ENCODE measurements at regions of chr1 and their contacts with region 1.

Region 1: GRCh38 chr1:157969697-157970485 is 23.6 kb upstream of the KIRREL1 start:
- DNase-seq: no peak
- H3K4me3 ChIP-seq: no peak overlapping the region
- H3K27ac ChIP-seq: no peak overlapping the region
- H3K4me1 ChIP-seq: no peaks in the 10 kb centered on the region
- H3K27me3 ChIP-seq: peaks cover 0 to 1% of the 10 kb centered on the region in 2 donors
- CTCF ChIP-seq: peak; percentile 22 to 51 (median 32)
- POLR2A ChIP-seq: no peak

Region 2: DNA sequence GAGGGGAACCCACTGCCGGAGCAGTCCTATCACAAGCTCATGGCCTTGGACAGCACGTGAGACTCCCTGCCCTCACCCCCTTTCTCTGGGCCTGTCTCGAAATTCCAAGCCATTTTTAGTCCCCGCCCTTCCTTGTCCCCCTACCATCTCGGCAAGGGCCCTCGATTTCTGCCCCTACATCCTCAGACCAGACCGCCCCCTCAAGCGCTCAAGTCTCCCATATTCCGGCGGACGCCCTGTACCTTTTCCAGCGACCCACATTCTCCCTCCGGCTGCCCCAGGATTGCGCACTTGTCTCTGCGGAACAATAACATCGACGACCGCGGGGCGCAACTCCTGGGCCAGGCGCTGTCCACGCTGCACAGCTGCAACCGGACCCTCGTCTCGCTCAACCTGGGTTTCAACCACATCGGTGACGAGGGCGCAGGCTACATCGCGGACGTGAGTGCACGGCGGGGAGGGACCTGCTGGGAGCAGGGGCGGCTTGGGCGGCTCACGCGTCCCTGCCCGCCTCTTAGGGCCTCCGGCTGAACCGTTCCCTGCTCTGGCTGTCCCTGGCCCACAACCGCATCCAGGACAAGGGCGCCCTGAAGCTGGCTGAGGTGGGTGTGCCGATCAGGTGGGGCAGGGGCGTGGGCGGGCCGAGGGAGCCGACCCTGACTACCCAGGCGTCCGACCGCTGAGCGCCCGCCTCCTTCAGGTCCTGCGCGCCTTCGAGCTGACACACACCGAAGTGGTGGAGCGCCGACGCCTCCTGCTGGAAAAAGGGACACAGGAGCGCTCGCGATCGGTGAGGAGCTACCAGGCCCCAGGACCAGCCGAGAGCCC is 1042.5 kb before region 1 on chr1:
- intact Hi-C with region 1: no loop called
- DNase-seq: peak; percentile 33 to 71
- H3K4me3 ChIP-seq: peak overlapping the region in 2 of 3 donors; percentile 32 to 60
- H3K27ac ChIP-seq: no peak overlapping the region
- H3K4me1 ChIP-seq: peaks cover 5 to 11% of the 10 kb centered on the region in 2 donors
- H3K27me3 ChIP-seq: peaks cover 4 to 44% of the 10 kb centered on the region in 2 donors
- CTCF ChIP-seq: peak in 2 of 3 donors; percentile 52 to 65
- POLR2A ChIP-seq: no peak

Region 3: GRCh38 chr1:157448636-157449035 is 521.3 kb before region 1 on chr1:
- intact Hi-C with region 1: no loop called
- DNase-seq: no peak
- H3K4me3 ChIP-seq: no peak overlapping the region
- H3K27ac ChIP-seq: no peak overlapping the region
- H3K4me1 ChIP-seq: no peaks in the 10 kb centered on the region
- H3K27me3 ChIP-seq: no peaks in the 10 kb centered on the region
- CTCF ChIP-seq: no peak
- POLR2A ChIP-seq: no peak

Region 4: GRCh38 chr1:157955857-157956256 is 14.0 kb before region 1 on chr1:
- intact Hi-C with region 1: loop called (anchors 1 kb)
- DNase-seq: no peak
- H3K4me3 ChIP-seq: no peak overlapping the region
- H3K27ac ChIP-seq: no peak overlapping the region
- H3K4me1 ChIP-seq: no peaks in the 10 kb centered on the region
- H3K27me3 ChIP-seq: no peaks in the 10 kb centered on the region
- CTCF ChIP-seq: no peak
- POLR2A ChIP-seq: no peak

Region 5: GRCh38 chr1:157985473-157985872 is 15.6 kb after region 1 on chr1:
- intact Hi-C with region 1: loop called (anchors 1 kb)
- DNase-seq: no peak
- H3K4me3 ChIP-seq: no peak overlapping the region
- H3K27ac ChIP-seq: no peak overlapping the region
- H3K4me1 ChIP-seq: no peaks in the 10 kb centered on the region
- H3K27me3 ChIP-seq: no peaks in the 10 kb centered on the region
- CTCF ChIP-seq: no peak
- POLR2A ChIP-seq: no peak

Region 6: GRCh38 chr1:158035976-158036583 is 66.2 kb after region 1 on chr1:
- intact Hi-C with region 1: no loop called
- DNase-seq: no peak
- H3K4me3 ChIP-seq: no peak overlapping the region
- H3K27ac ChIP-seq: peak overlapping the region in 1 of 2 donors; percentile 5
- H3K4me1 ChIP-seq: no peaks in the 10 kb centered on the region
- H3K27me3 ChIP-seq: no peaks in the 10 kb centered on the region
- CTCF ChIP-seq: peak; percentile 52 to 62 (median 56)
- POLR2A ChIP-seq: no peak